B cell (primary cell): ENCODE measurements at regions of chr9 and their contacts with region 1.

Region 1: DNA sequence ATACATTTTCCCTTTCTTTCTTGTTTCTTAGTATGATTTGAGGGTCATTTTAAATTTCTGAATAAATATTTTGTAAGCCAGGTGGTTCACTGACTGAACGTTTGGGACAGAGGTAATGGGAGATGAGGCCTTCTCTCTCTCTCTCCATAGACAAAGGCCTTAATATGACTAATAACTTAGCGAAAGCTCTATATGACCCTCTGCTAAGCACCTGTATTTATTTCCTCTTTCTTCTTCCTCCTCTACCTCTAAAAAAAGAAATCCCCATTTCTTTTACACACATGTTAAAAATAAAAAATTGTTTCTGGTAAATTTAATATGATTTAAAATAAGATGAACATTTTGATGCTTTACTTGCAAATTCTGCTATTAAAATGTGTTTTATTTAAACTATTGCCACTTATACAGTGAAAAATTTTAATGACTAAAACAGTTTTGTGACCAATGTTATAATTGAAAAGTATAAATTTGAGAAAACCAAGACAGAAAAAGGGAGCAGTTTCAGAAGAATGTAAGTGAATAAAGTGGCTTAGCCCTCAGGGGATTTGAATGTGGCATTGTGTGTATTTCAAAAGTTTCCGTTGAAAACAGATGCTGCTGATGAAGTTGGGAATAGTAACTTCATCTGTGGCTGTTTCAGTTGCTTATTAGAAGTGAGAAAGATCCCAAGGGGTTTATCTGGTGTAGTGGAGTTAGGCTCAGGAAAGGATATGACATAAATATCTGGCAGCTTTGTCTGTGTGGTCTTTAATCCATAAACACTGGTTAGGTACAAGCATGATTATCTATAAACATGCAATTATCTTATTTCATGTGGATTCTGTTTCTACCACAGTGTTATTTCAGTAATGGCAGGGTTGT is 128.6 kb upstream of the GRHPR start:
- DNase-seq: peak; percentile 81
- ATAC-seq: peak; percentile 70
- H3K4me3 ChIP-seq: peak overlapping the region in 3 of 5 experiments; percentile 4 to 8 (median 7)
- H3K4me3 Mint-ChIP-seq: peak overlapping the region; percentile 74
- H3K27ac ChIP-seq: peak overlapping the region; percentile 79 to 88
- H3K27ac Mint-ChIP-seq: peak overlapping the region; percentile 95
- H3K4me1 ChIP-seq: peaks cover 79 to 97% of the 10 kb centered on the region in 2 donors
- H3K4me1 Mint-ChIP-seq: peaks cover 82% of the 10 kb centered on the region
- H3K27me3 ChIP-seq: no peaks in the 10 kb centered on the region
- H3K27me3 Mint-ChIP-seq: no peaks in the 10 kb centered on the region
- CTCF ChIP-seq: no peak

Region 2: DNA sequence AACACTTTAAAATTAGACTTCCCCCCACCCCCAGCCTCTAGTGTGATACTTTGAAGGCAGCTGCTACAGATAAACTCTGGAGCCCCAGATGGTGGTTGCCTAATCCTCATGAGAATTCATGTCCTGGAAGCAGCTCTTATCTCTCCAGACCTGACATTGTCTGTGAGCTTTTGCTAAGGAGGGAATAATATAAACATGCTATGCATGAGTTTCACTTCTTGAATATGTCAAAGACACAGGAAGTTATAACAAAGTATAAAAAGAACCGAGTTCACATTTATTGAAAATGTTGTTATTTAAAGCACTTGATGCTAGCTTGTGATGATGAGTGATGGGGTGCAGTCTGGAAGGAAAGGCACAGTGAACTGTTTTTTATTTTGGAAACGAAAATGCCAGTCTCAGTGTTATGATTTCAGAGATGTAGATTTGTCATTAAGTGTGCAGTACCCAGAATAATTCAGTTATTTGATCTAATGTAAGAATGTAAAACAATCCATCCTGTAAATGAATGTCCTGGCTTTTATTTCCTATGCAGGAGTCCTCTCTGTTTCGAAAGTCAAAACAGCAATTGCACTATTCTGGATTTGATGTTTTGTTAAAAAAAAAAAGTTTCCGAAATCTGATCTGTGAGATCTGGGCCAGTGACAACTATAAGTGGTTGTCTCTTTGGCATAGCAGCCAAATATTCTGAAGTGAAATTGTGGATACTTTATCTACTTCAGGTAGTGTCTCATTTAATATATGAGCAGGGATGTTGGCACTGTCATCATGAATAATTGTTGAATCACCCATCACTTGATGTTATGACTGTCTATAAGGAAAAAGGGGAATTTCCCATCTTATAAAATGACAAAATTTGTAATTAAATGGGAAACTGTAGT is 96.5 kb before region 1 on chr9:
- CTCF ChIA-PET with region 1: interaction called, 3 read pairs
- POLR2A ChIA-PET with region 1: no interaction called
- intact Hi-C with region 1: loop called (anchors 2 kb)
- DNase-seq: peak; percentile 83
- ATAC-seq: peak; percentile 79
- H3K4me3 ChIP-seq: peak overlapping the region in 3 of 5 experiments; percentile 13 to 35 (median 21)
- H3K4me3 Mint-ChIP-seq: peak overlapping the region; percentile 76
- H3K27ac ChIP-seq: peak overlapping the region; percentile 81 to 87
- H3K27ac Mint-ChIP-seq: peak overlapping the region; percentile 87
- H3K4me1 ChIP-seq: peaks cover 83 to 91% of the 10 kb centered on the region in 2 donors
- H3K4me1 Mint-ChIP-seq: peaks cover 82% of the 10 kb centered on the region
- H3K27me3 ChIP-seq: no peaks in the 10 kb centered on the region
- H3K27me3 Mint-ChIP-seq: no peaks in the 10 kb centered on the region
- CTCF ChIP-seq: no peak

Region 3: GRCh38 chr9:37251452-37251851 is 42.4 kb before region 1 on chr9:
- CTCF ChIA-PET with region 1: interaction called, 4 read pairs
- POLR2A ChIA-PET with region 1: no interaction called
- intact Hi-C with region 1: loop called (anchors 5 kb)
- DNase-seq: peak; percentile 81
- ATAC-seq: peak; percentile 93
- H3K4me3 ChIP-seq: peak overlapping the region in 1 of 5 experiments; percentile 18
- H3K4me3 Mint-ChIP-seq: peak overlapping the region; percentile 66
- H3K27ac ChIP-seq: peak overlapping the region; percentile 62 to 90
- H3K27ac Mint-ChIP-seq: peak overlapping the region; percentile 96
- H3K4me1 ChIP-seq: peaks cover 34 to 50% of the 10 kb centered on the region in 2 donors
- H3K4me1 Mint-ChIP-seq: peaks cover 59% of the 10 kb centered on the region
- H3K27me3 ChIP-seq: no peaks in the 10 kb centered on the region
- H3K27me3 Mint-ChIP-seq: no peaks in the 10 kb centered on the region
- CTCF ChIP-seq: no peak

Region 4: GRCh38 chr9:37283730-37284325 is 10.1 kb before region 1 on chr9:
- CTCF ChIA-PET with region 1: interaction called, 7 read pairs
- POLR2A ChIA-PET with region 1: interaction called, 8 read pairs
- intact Hi-C with region 1: loop called (anchors 1 kb)
- DNase-seq: peak; percentile 54
- ATAC-seq: peak; percentile 57
- H3K4me3 ChIP-seq: peak overlapping the region in 4 of 5 experiments; percentile 13 to 40 (median 31)
- H3K4me3 Mint-ChIP-seq: peak overlapping the region; percentile 75
- H3K27ac ChIP-seq: peak overlapping the region; percentile 54 to 78
- H3K27ac Mint-ChIP-seq: peak overlapping the region; percentile 90
- H3K4me1 ChIP-seq: peaks cover 40 to 61% of the 10 kb centered on the region in 2 donors
- H3K4me1 Mint-ChIP-seq: peaks cover 60% of the 10 kb centered on the region
- H3K27me3 ChIP-seq: no peaks in the 10 kb centered on the region
- H3K27me3 Mint-ChIP-seq: no peaks in the 10 kb centered on the region
- CTCF ChIP-seq: no peak

Region 5: GRCh38 chr9:37309136-37309535 is 15.2 kb after region 1 on chr9:
- CTCF ChIA-PET with region 1: interaction called, 6 read pairs
- POLR2A ChIA-PET with region 1: interaction called, 6 read pairs
- intact Hi-C with region 1: loop called (anchors 2 kb)
- DNase-seq: peak; percentile 77
- ATAC-seq: peak; percentile 82
- H3K4me3 ChIP-seq: no peak overlapping the region
- H3K4me3 Mint-ChIP-seq: peak overlapping the region; percentile 16
- H3K27ac ChIP-seq: peak overlapping the region; percentile 5 to 64
- H3K27ac Mint-ChIP-seq: peak overlapping the region; percentile 84
- H3K4me1 ChIP-seq: peaks cover 27 to 42% of the 10 kb centered on the region in 2 donors
- H3K4me1 Mint-ChIP-seq: peaks cover 35% of the 10 kb centered on the region
- H3K27me3 ChIP-seq: no peaks in the 10 kb centered on the region
- H3K27me3 Mint-ChIP-seq: no peaks in the 10 kb centered on the region
- CTCF ChIP-seq: peak; percentile 76

Region 6: DNA sequence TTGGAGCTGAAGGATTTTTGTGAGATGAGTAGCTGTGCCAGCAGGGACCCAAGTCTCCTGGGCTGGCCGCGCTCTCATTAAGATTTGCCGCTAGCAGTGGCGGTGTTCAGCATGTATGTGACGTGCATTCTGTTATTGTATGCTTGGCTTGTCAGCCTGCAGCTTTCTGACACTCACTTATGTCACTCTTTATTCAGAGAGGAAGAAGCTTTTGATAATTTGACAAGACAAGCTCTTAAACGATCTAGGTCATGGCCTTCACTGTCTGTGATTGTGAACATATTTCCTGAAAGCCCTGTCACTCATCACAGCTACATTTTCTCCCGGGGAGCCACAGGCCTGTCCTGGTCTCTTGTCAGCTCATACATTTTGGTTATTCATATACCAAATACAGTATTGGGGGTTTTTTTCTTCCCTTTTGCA is 30.4 kb after region 1 on chr9:
- CTCF ChIA-PET with region 1: interaction called, 37 read pairs
- POLR2A ChIA-PET with region 1: no interaction called
- intact Hi-C with region 1: loop called (anchors 1 kb)
- DNase-seq: peak; percentile 90
- ATAC-seq: peak; percentile 84
- H3K4me3 ChIP-seq: peak overlapping the region in 2 of 5 experiments; percentile 7 to 31
- H3K4me3 Mint-ChIP-seq: peak overlapping the region; percentile 76
- H3K27ac ChIP-seq: peak overlapping the region; percentile 97 to 98
- H3K27ac Mint-ChIP-seq: peak overlapping the region; percentile 100
- H3K4me1 ChIP-seq: peaks cover 43 to 78% of the 10 kb centered on the region in 2 donors
- H3K4me1 Mint-ChIP-seq: peaks cover 62% of the 10 kb centered on the region
- H3K27me3 ChIP-seq: no peaks in the 10 kb centered on the region
- H3K27me3 Mint-ChIP-seq: no peaks in the 10 kb centered on the region
- CTCF ChIP-seq: no peak

Region 7: DNA sequence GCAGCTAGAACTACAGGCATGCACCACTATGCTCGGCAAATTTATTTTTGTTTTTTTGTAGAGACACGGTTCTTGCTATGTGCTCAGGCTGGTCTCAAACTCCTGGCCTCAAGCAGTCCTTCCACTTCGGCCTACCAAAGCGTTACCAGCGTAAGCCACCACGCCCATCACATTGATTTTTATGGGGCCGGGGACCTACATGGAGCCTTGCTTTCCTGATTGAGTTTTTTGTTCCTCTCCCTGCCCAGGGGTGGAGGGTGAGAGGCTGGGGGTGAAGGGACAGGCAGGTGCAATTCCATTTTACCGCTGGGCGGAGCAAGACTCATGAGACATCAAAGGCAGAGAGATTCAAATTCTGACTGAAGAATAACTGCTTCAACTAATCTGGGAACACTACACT is 1100.5 kb after region 1 on chr9:
- CTCF ChIA-PET with region 1: no interaction called
- POLR2A ChIA-PET with region 1: no interaction called
- intact Hi-C with region 1: no loop called
- DNase-seq: no peak
- ATAC-seq: no peak
- H3K4me3 ChIP-seq: no peak overlapping the region
- H3K4me3 Mint-ChIP-seq: no peak overlapping the region
- H3K27ac ChIP-seq: no peak overlapping the region
- H3K27ac Mint-ChIP-seq: no peak overlapping the region
- H3K4me1 ChIP-seq: peaks cover 6 to 13% of the 10 kb centered on the region in 2 donors
- H3K4me1 Mint-ChIP-seq: peaks cover 21% of the 10 kb centered on the region
- H3K27me3 ChIP-seq: peaks cover 0 to 3% (median 0%) of the 10 kb centered on the region in 4 experiments
- H3K27me3 Mint-ChIP-seq: peaks cover 10% of the 10 kb centered on the region
- CTCF ChIP-seq: no peak